Heart left ventricle (tissue), 16 donors: ENCODE measurements at regions of chr15 and their contacts with region 1.

Region 1: GRCh38 chr15:37100109-37100965 is at the start of gene MEIS2:
- DNase-seq: peak; percentile 90 to 95 (median 95)
- ATAC-seq: peak; percentile 72 to 78 (median 73)
- H3K4me3 ChIP-seq: peak within 1 kb of the TSS; percentile 62 to 82 (median 76)
- H3K27ac ChIP-seq: peak within 1 kb of the TSS; percentile 92 to 98 (median 96)
- H3K4me1 ChIP-seq: peaks cover 0 to 21% (median 3%) of the 10 kb centered on the region in 12 donors
- H3K27me3 ChIP-seq: peaks cover 0 to 71% (median 13%) of the 10 kb centered on the region in 9 donors
- CTCF ChIP-seq: no peak
- POLR2A ChIP-seq: peak in 1 of 2 donors; percentile 52
- total RNA-seq, gene MEIS2: 38.3 to 56.2 (median 49.7) TPM

Region 2: DNA sequence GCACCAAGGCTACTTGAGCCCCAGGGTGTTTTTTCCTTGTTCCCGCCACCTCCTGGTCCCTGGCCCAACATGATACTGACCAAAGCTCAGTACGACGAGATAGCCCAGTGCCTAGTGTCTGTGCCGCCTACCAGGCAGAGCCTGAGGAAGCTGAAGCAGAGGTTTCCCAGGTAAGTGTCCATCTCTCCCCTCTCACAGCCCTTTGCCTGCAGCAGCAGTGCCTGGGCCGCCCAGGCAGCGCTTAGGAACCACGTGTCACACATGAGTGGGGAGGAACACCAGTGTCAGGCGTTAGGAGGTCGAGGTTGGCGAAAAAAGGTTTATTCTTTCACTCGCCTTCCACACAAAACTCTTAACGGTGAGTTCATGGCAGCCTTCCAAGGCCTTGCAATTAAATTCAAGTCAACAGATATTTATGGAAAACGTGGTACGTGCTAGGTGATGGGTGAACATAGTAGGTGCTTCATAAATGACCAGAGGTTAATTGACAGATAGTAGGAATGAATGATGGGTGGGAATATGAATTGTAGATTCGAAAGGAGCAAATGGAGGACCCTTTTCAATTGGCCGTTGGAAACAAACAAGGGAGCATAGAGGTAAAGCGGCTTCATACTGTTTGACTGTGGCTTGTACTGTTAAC is 520.4 kb before region 1 on chr15:
- intact Hi-C with region 1: loop called in 1 of 10 experiments (anchors 10 kb)
- DNase-seq: peak in 4 of 5 donors; percentile 31 to 66 (median 44)
- ATAC-seq: peak in 3 of 4 donors; percentile 23 to 54 (median 36)
- H3K4me3 ChIP-seq: peak overlapping the region; percentile 15 to 83 (median 74)
- H3K27ac ChIP-seq: peak overlapping the region; percentile 18 to 91 (median 88)
- H3K4me1 ChIP-seq: peaks cover 0 to 41% (median 12%) of the 10 kb centered on the region in 12 donors
- H3K27me3 ChIP-seq: no peaks in the 10 kb centered on the region
- CTCF ChIP-seq: peak in 1 of 12 donors; percentile 0
- POLR2A ChIP-seq: no peak

Region 3: DNA sequence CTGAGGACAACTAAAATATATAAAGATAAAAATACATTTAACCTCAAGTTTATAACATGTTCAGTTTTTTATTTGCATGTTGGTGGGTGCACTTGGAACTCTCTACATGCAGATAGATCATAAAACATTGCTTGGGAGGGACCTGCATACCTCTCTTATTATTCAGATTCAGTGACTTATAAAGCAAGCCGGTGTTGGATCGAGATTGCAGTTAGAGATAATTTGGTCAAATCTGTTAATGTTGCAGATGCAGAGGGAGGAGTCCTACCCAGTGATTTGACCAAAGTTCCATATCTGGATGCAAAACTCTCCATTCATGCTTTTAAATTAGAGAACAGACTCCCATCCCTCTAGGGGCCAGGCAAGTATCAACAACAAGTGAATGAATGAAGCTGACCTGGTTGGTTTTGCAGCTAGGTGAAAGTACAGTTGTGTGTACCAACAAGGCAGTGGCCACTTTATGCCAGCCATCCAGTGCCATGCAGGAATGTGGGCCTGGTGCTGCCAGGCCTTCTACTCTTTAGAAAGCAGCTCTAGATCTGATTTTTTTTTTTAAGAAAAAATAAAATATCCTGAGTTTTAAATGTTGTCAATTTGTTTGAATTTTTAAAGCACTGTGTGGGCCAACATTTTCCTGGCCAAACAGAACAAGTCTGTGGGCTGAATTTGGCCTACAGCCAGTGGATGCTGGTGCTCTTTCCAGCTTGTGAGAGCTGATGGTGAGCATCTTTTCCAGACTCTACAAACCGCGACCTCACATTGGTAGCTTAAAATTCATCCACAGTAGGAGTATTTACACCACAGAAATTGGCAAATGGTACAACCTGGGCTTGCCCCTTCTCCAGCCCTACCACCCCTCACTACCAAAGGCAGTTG is 508.6 kb before region 1 on chr15:
- intact Hi-C with region 1: loop called in 3 of 10 experiments (anchors 10 kb)
- DNase-seq: peak in 4 of 5 donors; percentile 36 to 50 (median 46)
- ATAC-seq: peak in 1 of 4 donors; percentile 28
- H3K4me3 ChIP-seq: no peak overlapping the region
- H3K27ac ChIP-seq: peak overlapping the region in 10 of 12 donors; percentile 14 to 97 (median 69)
- H3K4me1 ChIP-seq: peaks cover 0 to 22% (median 7%) of the 10 kb centered on the region in 12 donors
- H3K27me3 ChIP-seq: no peaks in the 10 kb centered on the region
- CTCF ChIP-seq: no peak
- POLR2A ChIP-seq: no peak

Region 4: DNA sequence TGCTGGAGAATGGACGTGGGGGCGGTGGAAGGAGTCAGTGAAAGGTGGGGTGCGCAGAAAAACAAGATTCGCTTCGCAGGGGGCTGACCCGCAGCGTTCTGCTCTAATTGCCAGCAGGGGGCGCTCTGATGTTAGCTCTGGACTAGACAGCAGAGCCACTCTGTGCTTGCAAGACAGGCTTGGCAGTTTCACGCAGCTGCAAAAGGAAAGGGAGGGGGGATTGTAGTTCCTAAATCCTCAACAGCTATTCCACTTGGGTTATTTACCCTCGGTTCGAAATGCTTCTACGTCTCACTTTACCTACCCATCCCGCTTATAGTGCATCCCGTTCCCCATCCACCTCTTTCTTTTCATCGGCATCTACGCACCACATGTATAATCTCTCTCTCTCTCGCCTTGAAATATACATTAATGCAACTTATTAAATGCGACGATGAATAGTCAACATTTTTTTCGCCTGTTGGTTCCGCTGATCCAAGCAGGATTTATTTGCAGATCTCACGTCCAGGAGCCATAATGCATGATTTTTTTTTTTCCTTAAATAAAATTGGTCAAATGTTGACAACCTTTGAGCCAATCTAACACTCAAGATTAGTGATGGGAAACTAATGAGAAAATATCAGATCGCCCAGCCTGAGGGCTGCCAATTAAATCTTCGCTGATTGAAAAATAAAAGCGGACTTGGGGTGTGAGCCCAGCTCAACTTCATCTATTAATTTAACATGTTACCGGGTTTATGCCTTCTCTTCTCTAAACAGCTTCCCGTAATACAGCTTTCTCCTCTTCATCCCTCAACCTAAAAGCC is 216.4 kb before region 1 on chr15:
- intact Hi-C with region 1: loop called (anchors 5 to 10 kb)
- DNase-seq: peak; percentile 86 to 92 (median 89)
- ATAC-seq: peak; percentile 86 to 91 (median 90)
- H3K4me3 ChIP-seq: peak overlapping the region in 11 of 12 donors; percentile 10 to 56 (median 43)
- H3K27ac ChIP-seq: peak overlapping the region in 1 of 12 donors; percentile 79
- H3K4me1 ChIP-seq: peaks cover 0 to 32% (median 3%) of the 10 kb centered on the region in 12 donors
- H3K27me3 ChIP-seq: peaks cover 0 to 94% (median 20%) of the 10 kb centered on the region in 9 donors
- CTCF ChIP-seq: peak; percentile 73 to 91 (median 82)
- POLR2A ChIP-seq: no peak

Region 5: DNA sequence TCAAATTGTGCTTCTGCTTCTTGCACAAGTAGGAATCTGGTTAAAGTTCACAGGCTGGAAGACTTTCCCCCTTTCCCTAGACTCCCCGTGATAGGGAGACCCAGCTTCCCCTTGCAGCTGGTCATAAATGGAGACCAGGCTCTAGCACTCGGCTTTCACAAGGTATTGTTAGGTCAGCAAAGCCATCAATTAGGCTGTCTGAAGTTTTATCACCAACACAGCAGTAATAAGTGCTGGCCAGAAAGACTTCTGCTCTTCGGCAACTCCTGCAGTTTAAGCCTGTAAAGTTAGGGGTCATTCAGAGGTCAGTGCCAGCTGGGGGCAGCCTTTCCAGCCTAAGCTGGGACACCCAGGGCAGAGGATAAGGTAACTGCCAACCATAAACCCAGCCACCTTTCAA is 203.4 kb before region 1 on chr15:
- intact Hi-C with region 1: loop called in 1 of 10 experiments (anchors 5 kb)
- DNase-seq: no peak
- ATAC-seq: peak; percentile 55 to 76 (median 66)
- H3K4me3 ChIP-seq: no peak overlapping the region
- H3K27ac ChIP-seq: peak overlapping the region in 10 of 12 donors; percentile 13 to 61 (median 43)
- H3K4me1 ChIP-seq: peaks cover 0 to 28% (median 4%) of the 10 kb centered on the region in 12 donors
- H3K27me3 ChIP-seq: no peaks in the 10 kb centered on the region
- CTCF ChIP-seq: no peak
- POLR2A ChIP-seq: no peak

Region 6: DNA sequence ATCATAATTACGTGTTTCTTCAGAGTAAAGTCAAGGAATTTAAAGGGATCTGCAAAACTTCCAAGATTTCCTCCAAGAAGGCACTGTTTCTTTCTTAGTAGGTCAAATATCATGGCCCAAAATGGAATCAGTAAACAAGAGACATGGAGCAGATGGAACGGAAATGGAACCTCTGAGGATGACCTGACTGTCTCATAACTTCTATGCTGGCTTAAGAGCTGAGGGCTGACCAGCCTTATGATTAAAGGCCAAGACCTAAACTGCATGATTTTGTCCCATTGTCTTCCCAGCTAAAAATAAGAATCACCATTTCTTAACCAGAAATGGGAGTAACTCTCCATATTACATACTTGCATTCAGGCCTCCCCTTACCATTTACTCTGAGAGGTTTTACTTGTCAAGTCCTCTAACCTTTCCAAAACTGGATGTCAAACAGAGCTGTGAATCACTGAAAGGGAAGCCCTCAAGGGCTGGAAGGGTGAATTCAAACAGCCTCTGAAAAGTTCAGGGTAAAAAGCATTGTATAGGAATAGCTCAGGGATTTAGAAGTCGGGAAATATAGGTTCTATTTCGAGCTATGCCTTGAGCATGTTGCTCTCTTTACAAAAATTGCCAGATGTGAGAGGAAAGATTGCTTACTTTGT is 103.7 kb before region 1 on chr15:
- intact Hi-C with region 1: loop called in 4 of 10 experiments (anchors 5 to 10 kb)
- DNase-seq: no peak
- ATAC-seq: peak in 3 of 4 donors; percentile 38 to 50 (median 45)
- H3K4me3 ChIP-seq: no peak overlapping the region
- H3K27ac ChIP-seq: peak overlapping the region; percentile 36 to 69 (median 60)
- H3K4me1 ChIP-seq: peaks cover 0 to 44% (median 11%) of the 10 kb centered on the region in 12 donors
- H3K27me3 ChIP-seq: no peaks in the 10 kb centered on the region
- CTCF ChIP-seq: peak in 1 of 12 donors; percentile 0
- POLR2A ChIP-seq: no peak

Region 7: DNA sequence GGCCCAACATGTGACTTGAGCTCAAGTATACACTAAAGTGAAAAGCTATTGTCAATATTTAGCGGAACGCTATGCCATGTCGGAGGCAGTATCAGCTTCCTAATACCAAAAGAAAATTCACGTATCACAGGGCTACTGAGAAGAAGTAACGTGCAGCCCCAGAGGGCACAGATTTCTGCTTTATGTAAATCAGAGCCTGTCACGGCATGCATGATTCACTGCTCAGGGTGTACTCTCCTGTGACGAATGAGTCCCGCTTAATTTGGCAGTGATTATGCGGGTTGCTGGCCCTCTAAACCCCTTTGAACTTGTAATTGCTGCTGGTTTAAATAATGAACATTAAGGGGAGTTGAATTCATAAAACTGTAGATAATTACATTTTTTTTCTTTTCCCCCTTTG is 85.3 kb before region 1 on chr15:
- intact Hi-C with region 1: loop called in 5 of 10 experiments (anchors 5 to 10 kb)
- DNase-seq: peak in 3 of 5 donors; percentile 40 to 68 (median 51)
- ATAC-seq: peak; percentile 76 to 86 (median 82)
- H3K4me3 ChIP-seq: no peak overlapping the region
- H3K27ac ChIP-seq: peak overlapping the region in 11 of 12 donors; percentile 68 to 87 (median 71)
- H3K4me1 ChIP-seq: peaks cover 0 to 64% (median 34%) of the 10 kb centered on the region in 12 donors
- H3K27me3 ChIP-seq: no peaks in the 10 kb centered on the region
- CTCF ChIP-seq: no peak
- POLR2A ChIP-seq: no peak